ENCODE measurements at regions of chr4 and their contacts with region 1.

Region 1: GRCh38 chr4:121182296-121182695 is 18.2 kb upstream of the TNIP3 start:
- DNase-seq: no peak
- ATAC-seq: peak; percentile 63
- H3K4me3 Mint-ChIP-seq: peak overlapping the region; percentile 76
- H3K27ac Mint-ChIP-seq: peak overlapping the region; percentile 89
- H3K4me1 Mint-ChIP-seq: peaks cover 63% of the 10 kb centered on the region
- H3K27me3 Mint-ChIP-seq: no peaks in the 10 kb centered on the region
- CTCF ChIP-seq: no peak

Region 2: DNA sequence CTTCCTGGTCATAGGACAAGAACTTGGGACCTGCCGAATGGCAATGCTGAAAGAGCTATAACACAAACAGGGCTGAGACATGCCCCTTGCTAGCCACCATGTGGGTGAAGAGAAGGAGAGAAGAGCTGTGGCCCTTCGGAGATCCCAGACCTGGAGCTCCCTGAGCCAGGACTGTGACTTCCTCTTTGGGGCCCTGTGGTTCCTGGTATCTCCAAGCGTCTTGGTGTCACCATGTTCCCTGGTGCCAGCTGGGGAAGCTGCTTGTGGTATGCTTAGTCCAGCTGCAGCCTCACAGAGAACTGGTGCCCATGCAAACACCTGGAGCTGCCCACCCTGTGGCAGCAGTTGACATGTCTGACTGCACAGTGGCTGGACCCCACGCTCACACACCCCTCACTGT is 178.4 kb before region 1 on chr4:
- CTCF ChIA-PET with region 1: no interaction called
- POLR2A ChIA-PET with region 1: no interaction called
- intact Hi-C with region 1: no loop called
- DNase-seq: no peak
- ATAC-seq: no peak
- H3K4me3 Mint-ChIP-seq: no peak overlapping the region
- H3K27ac Mint-ChIP-seq: no peak overlapping the region
- H3K4me1 Mint-ChIP-seq: peaks cover 28% of the 10 kb centered on the region
- H3K27me3 Mint-ChIP-seq: no peaks in the 10 kb centered on the region
- CTCF ChIP-seq: no peak

Region 3: GRCh38 chr4:121053601-121054143 is 128.6 kb before region 1 on chr4:
- CTCF ChIA-PET with region 1: no interaction called
- POLR2A ChIA-PET with region 1: no interaction called
- intact Hi-C with region 1: no loop called
- DNase-seq: no peak
- ATAC-seq: no peak
- H3K4me3 Mint-ChIP-seq: no peak overlapping the region
- H3K27ac Mint-ChIP-seq: no peak overlapping the region
- H3K4me1 Mint-ChIP-seq: peaks cover 9% of the 10 kb centered on the region
- H3K27me3 Mint-ChIP-seq: peaks cover 16% of the 10 kb centered on the region
- CTCF ChIP-seq: no peak

Region 4: DNA sequence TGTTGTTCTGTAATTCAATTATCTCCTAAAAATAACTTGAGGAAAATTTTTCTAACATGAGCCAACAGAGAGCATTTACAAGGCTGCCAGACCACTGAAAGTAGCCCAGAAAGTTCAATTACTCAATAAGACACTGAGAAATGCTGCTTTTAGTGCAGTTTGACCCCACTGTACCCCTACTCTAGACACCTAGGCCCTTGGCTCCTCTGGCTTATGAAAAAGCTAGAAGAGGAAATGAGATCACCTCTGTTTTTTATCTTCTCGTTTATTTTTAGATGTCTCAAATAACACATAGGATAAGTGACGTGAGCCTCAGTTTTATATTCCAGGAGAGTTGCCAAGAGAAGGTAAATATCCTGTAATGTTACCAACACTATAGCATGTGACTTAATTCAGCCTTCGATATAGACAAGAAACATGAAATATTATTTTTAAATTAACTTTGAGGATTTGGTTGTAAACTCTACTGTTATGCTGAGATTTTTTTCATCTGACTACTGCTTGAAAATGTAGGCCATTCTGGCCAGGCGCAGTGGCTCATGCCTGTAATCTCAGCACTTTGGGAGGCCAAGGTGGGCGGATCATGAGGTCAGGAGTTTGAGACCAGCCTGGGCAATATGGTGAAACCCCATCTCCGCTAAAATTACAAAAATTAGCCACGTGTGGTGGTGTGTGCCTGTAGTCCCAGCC is 42.6 kb before region 1 on chr4:
- CTCF ChIA-PET with region 1: interaction called, 5 read pairs
- POLR2A ChIA-PET with region 1: interaction called, 3 read pairs
- intact Hi-C with region 1: loop called (anchors 5 kb)
- DNase-seq: peak; percentile 36
- ATAC-seq: peak; percentile 71
- H3K4me3 Mint-ChIP-seq: no peak overlapping the region
- H3K27ac Mint-ChIP-seq: peak overlapping the region; percentile 91
- H3K4me1 Mint-ChIP-seq: peaks cover 58% of the 10 kb centered on the region
- H3K27me3 Mint-ChIP-seq: no peaks in the 10 kb centered on the region
- CTCF ChIP-seq: no peak

Region 5: DNA sequence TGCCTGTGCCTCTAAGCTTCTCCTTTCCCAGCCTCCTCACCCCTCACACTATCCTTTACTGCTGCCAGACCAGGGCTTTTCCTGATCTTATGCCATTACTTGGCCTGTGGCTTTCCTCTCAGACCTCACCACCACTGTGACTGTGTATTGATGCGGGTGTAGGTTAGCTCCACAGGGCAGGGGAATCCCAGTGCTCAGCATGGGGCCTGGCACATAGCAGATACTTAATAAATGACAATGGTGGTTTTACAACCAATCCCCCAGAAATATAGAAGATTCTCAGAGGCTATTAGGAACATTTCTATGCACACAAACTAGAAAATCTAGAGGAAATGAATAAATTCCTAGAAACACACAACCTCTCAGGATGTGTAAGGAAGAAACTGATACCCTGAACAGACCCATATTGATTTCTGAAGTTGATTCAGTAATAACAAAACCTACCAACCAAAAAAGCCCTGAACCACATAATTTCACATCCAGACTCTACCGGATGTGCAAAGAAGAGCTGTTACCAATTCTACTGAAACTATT is 328.1 kb after region 1 on chr4:
- CTCF ChIA-PET with region 1: no interaction called
- POLR2A ChIA-PET with region 1: no interaction called
- intact Hi-C with region 1: no loop called
- DNase-seq: peak; percentile 4
- ATAC-seq: peak; percentile 47
- H3K4me3 Mint-ChIP-seq: no peak overlapping the region
- H3K27ac Mint-ChIP-seq: no peak overlapping the region
- H3K4me1 Mint-ChIP-seq: no peaks in the 10 kb centered on the region
- H3K27me3 Mint-ChIP-seq: peaks cover 19% of the 10 kb centered on the region
- CTCF ChIP-seq: no peak

Measured in activated CD8-positive, alpha-beta T cell treated with anti-CD3 and anti-CD28 coated beads for 36 hours (primary cell).